Right ventricle myocardium inferior (tissue), 1 donor: ENCODE measurements at regions of chr12 and their contacts with region 1.

Region 1: DNA sequence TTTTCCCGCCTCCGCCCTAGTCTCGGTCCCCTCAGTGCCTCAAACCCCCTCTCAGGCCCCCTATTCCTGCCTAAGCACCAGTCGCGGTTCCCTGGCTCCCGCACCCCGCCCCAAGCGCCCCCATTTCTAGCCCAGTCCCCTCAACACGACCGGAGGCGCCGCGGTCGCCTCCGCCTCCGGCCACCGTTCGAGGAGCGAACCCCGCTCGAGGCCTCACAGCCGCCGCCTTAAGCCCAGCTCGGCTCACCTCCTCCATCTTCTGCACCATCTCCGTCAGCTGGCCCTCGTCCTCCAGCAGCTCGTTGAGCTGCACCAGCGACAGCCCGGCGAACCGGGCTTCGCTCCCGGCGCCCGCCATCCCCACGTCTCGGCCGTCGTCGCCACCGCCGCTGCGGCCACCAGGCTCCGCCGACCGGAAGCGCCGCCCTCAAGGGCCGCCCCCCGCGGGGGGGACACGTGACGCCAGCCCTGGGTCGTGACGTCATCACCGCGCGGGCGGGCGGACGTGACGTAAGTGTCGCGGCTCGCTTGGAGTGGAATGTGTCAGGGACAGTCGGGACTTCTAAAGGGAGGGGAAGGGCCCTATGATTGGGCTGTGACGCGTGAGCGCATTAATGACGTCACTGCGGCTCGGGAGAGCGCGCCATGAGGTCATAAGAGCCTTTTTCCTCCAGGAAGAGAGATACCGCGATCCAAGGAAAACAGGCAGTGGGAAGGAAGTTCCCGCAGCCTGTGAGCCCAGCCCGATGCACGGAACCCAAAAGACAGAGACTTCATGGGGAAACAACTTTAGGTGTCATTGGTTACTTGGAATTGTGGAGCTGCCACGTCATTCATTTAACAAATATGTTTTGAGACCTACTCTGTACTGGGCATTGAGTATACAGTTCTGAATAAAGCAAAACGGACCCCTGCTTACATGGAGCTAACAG is at the start of gene VPS37B:
- DNase-seq: peak; percentile 93
- ATAC-seq: peak; percentile 78
- total RNA-seq, gene VPS37B: 25.4 TPM

Region 2: GRCh38 chr12:122871851-122872780 is 23.9 kb before region 1 on chr12:
- intact Hi-C with region 1: loop called (anchors 2 kb)
- DNase-seq: peak; percentile 84
- ATAC-seq: peak; percentile 33

Region 3: DNA sequence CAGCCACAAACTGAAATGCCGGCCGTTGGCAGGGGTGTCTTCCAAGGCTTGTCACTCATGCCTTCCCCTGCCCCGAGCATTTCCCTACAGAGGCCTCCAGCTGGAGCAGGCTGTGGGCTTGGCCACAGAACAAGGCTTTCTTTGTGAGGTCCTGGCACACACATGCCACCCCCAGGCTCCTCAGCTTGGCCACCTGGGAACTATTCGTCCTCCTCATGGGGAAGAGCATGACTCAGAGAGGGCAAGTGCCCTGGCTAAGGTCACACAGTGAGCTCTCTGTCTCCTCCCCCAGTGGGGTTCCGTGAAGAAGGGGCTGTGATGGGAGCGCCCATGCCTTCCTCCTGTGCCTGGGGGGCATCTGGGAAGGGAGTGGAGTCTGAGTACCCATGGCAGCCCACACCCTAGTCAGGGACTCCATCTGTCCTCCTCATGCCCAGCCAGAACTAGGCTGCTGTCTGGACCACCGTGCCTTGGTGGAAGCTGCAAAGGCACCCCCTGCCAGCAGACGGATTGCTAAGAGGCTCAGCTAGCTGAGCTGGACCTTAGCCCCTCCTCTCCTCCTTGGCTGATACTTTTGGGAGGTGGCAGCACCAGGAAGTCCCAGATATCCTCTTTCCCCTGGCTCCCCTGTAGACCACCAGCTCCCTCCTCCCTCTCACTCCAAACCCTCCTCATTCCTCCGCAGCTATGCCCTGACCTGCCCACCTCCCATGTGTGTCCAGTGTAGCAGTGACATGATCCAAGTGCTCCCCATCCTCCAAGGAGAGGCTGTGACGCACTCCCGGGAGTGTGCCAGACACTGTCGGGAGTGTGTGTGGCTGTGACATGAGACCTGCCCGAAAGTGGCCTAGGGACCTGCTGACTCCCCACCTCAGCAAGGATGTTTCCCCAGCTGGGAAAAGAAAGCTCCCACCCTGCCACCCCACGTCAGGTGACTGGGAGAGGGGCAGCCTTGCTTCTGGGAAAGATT is 48.9 kb after region 1 on chr12:
- intact Hi-C with region 1: loop called (anchors 5 kb)
- DNase-seq: peak; percentile 35
- ATAC-seq: no peak

Region 4: DNA sequence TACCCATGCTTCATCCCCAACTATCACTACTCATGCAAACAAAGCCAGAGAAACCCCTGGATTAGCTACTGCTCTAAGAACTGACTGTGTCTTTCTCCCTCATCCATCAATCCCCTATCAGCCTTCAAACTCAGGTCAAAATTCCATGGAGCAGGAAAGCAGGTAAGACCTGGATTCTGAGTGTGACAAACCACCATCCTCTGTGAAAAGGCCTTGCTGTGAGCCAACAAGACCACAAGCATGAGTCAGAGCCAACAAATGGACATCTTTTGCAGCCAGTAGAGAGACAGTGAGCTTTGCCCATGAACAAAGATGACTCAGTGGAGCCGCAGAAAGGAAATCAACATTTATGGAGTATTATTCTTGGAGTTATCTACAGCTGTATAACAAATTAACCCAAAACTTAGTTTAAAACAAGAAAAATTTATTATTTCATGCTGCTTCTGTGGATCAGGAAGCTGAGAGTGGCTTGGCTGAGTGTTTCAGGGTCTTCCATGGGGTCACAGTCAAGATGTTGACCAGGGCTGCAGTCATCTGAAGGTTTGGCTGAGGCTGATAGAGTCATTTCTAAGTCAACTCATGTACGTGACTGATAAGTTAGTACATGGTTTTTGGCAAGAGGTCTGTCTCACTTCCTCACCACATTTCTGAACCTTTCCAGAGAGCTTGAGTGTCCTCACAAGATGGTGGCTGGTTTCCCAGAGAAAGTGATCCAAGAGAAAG is 193.8 kb after region 1 on chr12:
- intact Hi-C with region 1: no loop called
- DNase-seq: no peak
- ATAC-seq: no peak